HEK293 (cell line): ENCODE measurements at regions of chr1 and their contacts with region 1.

Region 1: GRCh38 chr1:153670859-153671627 is at the start of gene ILF2:
- H3K4me3 ChIP-seq: peak within 1 kb of the TSS; percentile 85
- H3K27ac ChIP-seq: peak within 1 kb of the TSS; percentile 77
- H3K4me1 ChIP-seq: no peaks in the 10 kb centered on the region
- CTCF ChIP-seq: peak; percentile 90

Region 2: GRCh38 chr1:153698020-153698931 is 27.2 kb after region 1 on chr1:
- CTCF ChIA-PET with region 1: no interaction called
- POLR2A ChIA-PET with region 1: no interaction called
- H3K4me3 ChIP-seq: no peak overlapping the region
- H3K27ac ChIP-seq: peak overlapping the region; percentile 2; the same call in 1 of the 2 replicates
- H3K4me1 ChIP-seq: no peaks in the 10 kb centered on the region
- CTCF ChIP-seq: no peak

Region 3: GRCh38 chr1:153727463-153728304 is 56.6 kb after region 1 on chr1 and contains the start of gene INTS3:
- CTCF ChIA-PET with region 1: interaction called, 4 read pairs
- POLR2A ChIA-PET with region 1: interaction called, 11 read pairs
- H3K4me3 ChIP-seq: peak within 1 kb of the TSS; percentile 76
- H3K27ac ChIP-seq: peak within 1 kb of the TSS; percentile 85
- H3K4me1 ChIP-seq: peaks cover 3% of the 10 kb centered on the region; the same call in 1 of the 2 replicates
- CTCF ChIP-seq: no peak

Region 4: GRCh38 chr1:153763365-153764225 is 92.6 kb after region 1 on chr1:
- CTCF ChIA-PET with region 1: no interaction called
- POLR2A ChIA-PET with region 1: no interaction called
- H3K4me3 ChIP-seq: no peak overlapping the region
- H3K27ac ChIP-seq: no peak overlapping the region
- H3K4me1 ChIP-seq: no peaks in the 10 kb centered on the region
- CTCF ChIP-seq: no peak